Ovary (tissue), 10 donors: ENCODE measurements at regions of chr17 and their contacts with region 1.

Region 1: GRCh38 chr17:74950207-74950606 is 14.5 kb downstream of the OTOP3 start:
- DNase-seq: no peak
- H3K4me3 ChIP-seq: no peak overlapping the region
- H3K27ac ChIP-seq: no peak overlapping the region
- H3K4me1 ChIP-seq: no peaks in the 10 kb centered on the region
- H3K27me3 ChIP-seq: no peaks in the 10 kb centered on the region
- CTCF ChIP-seq: no peak
- EP300 ChIP-seq: no peak
- POLR2A ChIP-seq: no peak

Region 2: DNA sequence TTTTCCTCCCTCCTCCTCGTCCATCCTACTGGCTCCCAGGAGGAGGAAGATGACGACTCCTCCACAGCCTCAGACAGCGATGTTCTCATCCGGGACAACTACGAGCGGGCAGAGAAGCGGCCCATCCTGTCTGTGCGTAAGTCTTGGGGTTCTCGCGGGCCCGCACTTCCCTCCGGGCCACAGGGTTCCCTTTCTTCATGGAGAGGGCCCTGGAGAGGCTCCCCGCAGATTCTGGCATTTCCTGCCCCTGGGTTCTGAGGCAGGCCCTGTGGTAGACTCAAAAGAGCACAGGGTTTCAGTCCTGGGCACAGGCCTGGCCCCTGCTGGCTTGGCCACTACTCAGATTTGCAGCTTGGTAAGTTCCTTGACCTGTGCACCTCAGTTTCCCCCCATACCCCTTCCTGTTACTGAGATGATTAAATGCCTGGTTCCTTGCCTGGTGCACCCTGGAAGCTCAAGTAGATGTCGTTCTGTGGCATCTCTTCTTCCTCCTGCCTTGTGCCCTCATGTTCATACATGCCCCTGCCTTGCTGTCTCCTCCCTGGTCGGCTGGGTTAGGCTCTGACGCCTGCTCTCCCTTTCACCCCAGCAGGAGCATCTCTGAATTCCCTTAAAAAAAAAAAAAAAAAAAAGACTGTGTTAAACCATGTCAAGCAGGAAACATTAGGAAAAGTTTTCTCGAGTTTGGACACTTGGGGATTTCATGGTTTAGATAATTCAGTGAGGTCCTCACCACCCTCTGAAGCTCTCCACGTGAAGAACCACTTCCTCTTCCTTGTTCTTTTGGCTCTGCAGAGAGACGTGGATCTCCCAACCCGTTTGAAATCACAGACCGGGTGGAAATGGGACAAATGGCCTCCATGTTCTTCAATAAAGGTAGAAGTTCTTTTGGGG is 159.8 kb before region 1 on chr17:
- intact Hi-C with region 1: loop called in 3 of 4 experiments (anchors 5 to 10 kb)
- DNase-seq: no peak
- H3K4me3 ChIP-seq: no peak overlapping the region
- H3K27ac ChIP-seq: no peak overlapping the region
- H3K4me1 ChIP-seq: no peaks in the 10 kb centered on the region
- H3K27me3 ChIP-seq: no peaks in the 10 kb centered on the region
- CTCF ChIP-seq: no peak
- EP300 ChIP-seq: no peak
- POLR2A ChIP-seq: no peak

Region 3: GRCh38 chr17:75046582-75047289 is 96.5 kb after region 1 on chr17 and contains the starts of genes ATP5PD and KCTD2:
- intact Hi-C with region 1: no loop called
- DNase-seq: peak; percentile 96 to 98 (median 97)
- H3K4me3 ChIP-seq: peak within 1 kb of the TSS; percentile 97
- H3K27ac ChIP-seq: peak within 1 kb of the TSS; percentile 42 to 73
- H3K4me1 ChIP-seq: peaks cover 2% of the 10 kb centered on the region
- H3K27me3 ChIP-seq: no peaks in the 10 kb centered on the region
- CTCF ChIP-seq: peak in 1 of 3 donors; percentile 6
- EP300 ChIP-seq: no peak
- POLR2A ChIP-seq: peak; percentile 93
- total RNA-seq, gene ATP5PD: 137 to 226 (median 153) TPM
- total RNA-seq, gene KCTD2: 25.0 to 62.5 (median 50.2) TPM

Region 4: DNA sequence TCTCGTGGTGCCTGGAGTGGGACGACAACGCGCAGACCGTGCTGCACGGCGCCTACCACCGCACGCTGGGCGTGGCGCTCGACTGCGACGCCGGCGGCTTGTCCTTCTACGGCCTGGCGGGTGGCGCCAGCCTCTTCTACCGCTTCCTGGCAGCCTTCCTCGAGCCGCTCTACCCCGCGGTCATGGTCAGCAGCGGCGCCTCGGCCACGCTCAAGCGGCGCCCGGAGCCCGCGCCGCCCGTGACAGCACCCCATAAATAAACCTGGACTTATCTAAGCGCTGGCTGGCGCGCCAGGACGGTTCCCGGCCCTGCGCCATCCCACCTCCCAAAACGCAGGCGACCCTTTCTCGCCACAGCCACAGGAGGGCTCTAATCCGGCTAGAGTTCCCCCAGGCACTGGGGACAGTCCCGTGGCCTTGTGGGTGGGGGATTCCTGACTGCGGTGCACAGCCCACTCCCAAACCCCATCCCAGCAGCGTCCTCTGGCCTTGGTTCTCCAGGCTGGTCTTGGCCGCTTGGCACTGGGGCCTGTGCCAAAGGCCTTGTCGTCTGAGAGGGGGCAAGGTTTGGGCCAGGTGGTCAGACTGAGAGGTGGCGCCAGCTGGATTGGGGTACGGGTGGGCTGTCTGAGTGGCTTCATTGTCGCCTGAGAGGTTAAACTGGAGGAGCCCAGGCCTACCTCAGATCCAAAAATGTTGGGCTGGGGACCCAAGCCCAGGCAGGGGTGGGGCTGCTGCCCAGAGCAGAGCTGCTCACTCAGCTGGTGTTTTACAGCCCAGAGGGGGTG is 127.5 kb after region 1 on chr17:
- intact Hi-C with region 1: no loop called
- DNase-seq: peak; percentile 58 to 74 (median 62)
- H3K4me3 ChIP-seq: peak overlapping the region; percentile 39
- H3K27ac ChIP-seq: peak overlapping the region; percentile 20 to 44
- H3K4me1 ChIP-seq: peaks cover 5% of the 10 kb centered on the region
- H3K27me3 ChIP-seq: no peaks in the 10 kb centered on the region
- CTCF ChIP-seq: peak in 1 of 3 donors; percentile 7
- EP300 ChIP-seq: no peak
- POLR2A ChIP-seq: no peak